Common myeloid progenitor, CD34-positive (primary cell): ENCODE measurements at regions of chr16 and their contacts with region 1.

Region 1: GRCh38 chr16:84617791-84618580 is at the start of gene COTL1:
- DNase-seq: peak; percentile 94 to 96 (median 95)
- H3K4me3 ChIP-seq: peak within 1 kb of the TSS; percentile 63 to 85 (median 74)
- H3K27ac ChIP-seq: peak within 1 kb of the TSS in 1 of 2 experiments; percentile 49
- H3K4me1 ChIP-seq: peaks cover 0 to 32% (median 21%) of the 10 kb centered on the region in 4 experiments
- H3K27me3 ChIP-seq: no peaks in the 10 kb centered on the region

Region 2: GRCh38 chr16:84504420-84505248 is 113.4 kb before region 1 on chr16 and contains the start of gene MEAK7:
- CTCF ChIA-PET with region 1: interaction called, 151 read pairs
- POLR2A ChIA-PET with region 1: no interaction called
- DNase-seq: peak; percentile 96 to 97 (median 97)
- H3K4me3 ChIP-seq: peak within 1 kb of the TSS; percentile 71 to 99 (median 86)
- H3K27ac ChIP-seq: peak within 1 kb of the TSS; percentile 50 to 70
- H3K4me1 ChIP-seq: peaks cover 0 to 24% (median 21%) of the 10 kb centered on the region in 4 experiments
- H3K27me3 ChIP-seq: no peaks in the 10 kb centered on the region

Region 3: DNA sequence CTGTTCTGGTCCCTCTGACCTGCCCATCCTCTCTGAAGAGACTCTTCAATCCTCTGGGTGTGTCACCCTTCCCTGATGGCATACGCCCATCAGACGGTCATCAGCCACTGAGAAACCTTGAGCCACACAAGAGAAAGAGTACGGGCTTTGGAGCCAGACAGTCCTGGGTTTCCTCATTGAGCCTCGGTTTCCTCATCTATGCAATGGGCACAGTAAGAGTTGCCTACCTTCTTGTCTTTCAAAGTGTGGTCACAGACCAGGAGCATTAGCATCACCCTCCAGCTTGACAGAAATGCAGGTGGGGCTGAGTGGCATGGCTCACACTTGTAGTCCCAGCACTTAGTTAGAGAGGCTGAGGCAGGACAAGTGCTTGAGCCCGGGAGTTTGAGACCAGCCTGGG is 87.4 kb before region 1 on chr16:
- CTCF ChIA-PET with region 1: interaction called, 10 read pairs
- POLR2A ChIA-PET with region 1: no interaction called
- DNase-seq: no peak
- H3K4me3 ChIP-seq: no peak overlapping the region
- H3K27ac ChIP-seq: no peak overlapping the region
- H3K4me1 ChIP-seq: peaks cover 2 to 42% (median 18%) of the 10 kb centered on the region in 4 experiments
- H3K27me3 ChIP-seq: no peaks in the 10 kb centered on the region

Region 4: GRCh38 chr16:84544031-84544773 is 73.8 kb before region 1 on chr16:
- CTCF ChIA-PET with region 1: interaction called, 10 read pairs
- POLR2A ChIA-PET with region 1: no interaction called
- DNase-seq: peak in 2 of 3 donors; percentile 56 to 62
- H3K4me3 ChIP-seq: peak overlapping the region in 3 of 7 experiments; percentile 11 to 38 (median 30)
- H3K27ac ChIP-seq: no peak overlapping the region
- H3K4me1 ChIP-seq: peaks cover 0 to 18% (median 10%) of the 10 kb centered on the region in 4 experiments
- H3K27me3 ChIP-seq: no peaks in the 10 kb centered on the region

Region 5: GRCh38 chr16:84599521-84600202 is 18.3 kb before region 1 on chr16:
- CTCF ChIA-PET with region 1: interaction called, 10 read pairs
- POLR2A ChIA-PET with region 1: interaction called, 3 read pairs
- DNase-seq: peak; percentile 64 to 87 (median 79)
- H3K4me3 ChIP-seq: peak overlapping the region in 6 of 7 experiments; percentile 35 to 73 (median 50)
- H3K27ac ChIP-seq: peak overlapping the region; percentile 47 to 84
- H3K4me1 ChIP-seq: peaks cover 13 to 77% (median 54%) of the 10 kb centered on the region in 4 experiments
- H3K27me3 ChIP-seq: no peaks in the 10 kb centered on the region

Region 6: DNA sequence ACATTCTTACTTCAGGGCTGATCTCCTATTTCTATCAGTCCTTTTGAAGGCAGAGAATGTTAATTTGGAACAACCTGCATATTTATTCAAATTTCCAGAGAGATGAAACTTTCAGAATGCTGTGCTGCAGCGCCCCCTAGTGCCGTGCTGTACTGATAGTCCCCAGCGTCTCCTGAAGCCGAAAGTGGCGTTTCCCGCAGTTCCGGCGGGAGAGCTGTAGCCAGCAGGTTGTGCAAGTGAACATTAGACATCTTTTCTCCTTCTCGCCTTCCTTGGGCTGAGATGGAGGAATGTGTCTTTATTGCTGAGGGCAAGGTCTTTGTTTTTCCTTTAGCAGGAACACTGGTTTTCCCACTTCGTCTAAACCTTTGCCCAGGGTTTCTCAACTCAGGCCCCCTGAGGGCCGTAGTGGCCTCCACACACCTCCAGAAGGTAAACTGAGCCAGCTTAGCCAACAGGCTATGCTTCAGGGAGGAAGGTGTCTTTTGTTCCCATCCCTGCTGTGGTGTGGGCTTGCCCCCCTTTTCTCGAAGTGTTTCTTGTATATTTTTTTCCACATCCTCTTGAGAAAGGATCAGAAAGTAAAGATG is 108.2 kb after region 1 on chr16:
- CTCF ChIA-PET with region 1: interaction called, 46 read pairs
- POLR2A ChIA-PET with region 1: no interaction called
- DNase-seq: peak; percentile 79 to 85 (median 84)
- H3K4me3 ChIP-seq: peak overlapping the region in 6 of 7 experiments; percentile 52 to 78 (median 69)
- H3K27ac ChIP-seq: peak overlapping the region; percentile 20 to 69
- H3K4me1 ChIP-seq: peaks cover 29 to 88% (median 51%) of the 10 kb centered on the region in 4 experiments
- H3K27me3 ChIP-seq: no peaks in the 10 kb centered on the region